ENCODE measurements at regions of chr5 and their contacts with region 1.

Region 1: DNA sequence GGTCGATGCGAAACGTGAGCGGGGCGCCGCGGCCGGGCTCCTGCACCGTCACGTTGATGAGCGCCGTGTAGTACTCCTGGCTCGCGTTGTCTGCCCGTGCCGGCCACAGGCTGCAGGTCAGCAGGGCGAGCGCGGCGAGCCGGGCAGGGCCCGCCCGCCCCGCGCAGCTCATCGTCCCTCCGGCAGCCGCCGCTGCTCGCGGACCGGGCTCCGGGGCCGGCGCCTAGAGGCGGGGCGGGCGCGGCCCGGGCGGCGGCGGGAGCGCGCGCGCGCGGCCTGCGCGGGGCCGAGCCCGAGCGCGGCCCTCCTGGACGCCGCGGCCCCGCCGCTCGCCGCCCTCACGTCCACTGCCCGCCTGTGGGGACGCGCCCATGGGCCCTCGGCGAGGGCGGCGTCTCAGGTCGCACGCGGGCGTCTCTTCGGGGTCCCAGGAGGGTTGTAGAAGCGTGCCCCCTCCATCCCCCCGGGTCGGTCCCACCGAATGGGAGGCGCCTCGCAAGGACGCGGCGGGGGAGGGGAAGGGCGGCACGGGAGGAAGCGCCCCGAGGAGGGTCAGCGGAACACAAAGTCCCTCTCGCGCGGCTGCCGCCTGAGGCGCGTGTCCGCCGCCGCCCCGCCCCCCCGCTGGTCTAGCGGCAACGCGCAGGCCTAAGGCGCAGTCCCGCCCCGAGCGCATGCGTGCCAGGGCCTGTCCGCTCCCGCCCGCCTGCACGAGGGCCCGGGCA is at the start of gene RNF130:
- DNase-seq: peak; percentile 73 to 97
- H3K4me3 ChIP-seq: peak within 1 kb of the TSS; percentile 78
- H3K27ac ChIP-seq: peak within 1 kb of the TSS; percentile 68
- H3K4me1 ChIP-seq: peaks cover 20% of the 10 kb centered on the region
- H3K27me3 ChIP-seq: no peaks in the 10 kb centered on the region
- CTCF ChIP-seq: no peak
- total RNA-seq, gene RNF130: 49.6 and 52.9 TPM in 2 replicates

Region 2: GRCh38 chr5:179550511-179551230 is 521.0 kb before region 1 on chr5 and contains the start of gene RUFY1:
- CTCF ChIA-PET with region 1: no interaction called
- POLR2A ChIA-PET with region 1: no interaction called
- intact Hi-C with region 1: loop called (anchors 5 kb)
- DNase-seq: peak; percentile 58 to 91
- H3K4me3 ChIP-seq: peak within 1 kb of the TSS; percentile 100
- H3K27ac ChIP-seq: peak within 1 kb of the TSS; percentile 75
- H3K4me1 ChIP-seq: peaks cover 33% of the 10 kb centered on the region
- H3K27me3 ChIP-seq: no peaks in the 10 kb centered on the region
- CTCF ChIP-seq: no peak
- total RNA-seq, gene RUFY1: 63.9 and 72.2 TPM in 2 replicates

Region 3: DNA sequence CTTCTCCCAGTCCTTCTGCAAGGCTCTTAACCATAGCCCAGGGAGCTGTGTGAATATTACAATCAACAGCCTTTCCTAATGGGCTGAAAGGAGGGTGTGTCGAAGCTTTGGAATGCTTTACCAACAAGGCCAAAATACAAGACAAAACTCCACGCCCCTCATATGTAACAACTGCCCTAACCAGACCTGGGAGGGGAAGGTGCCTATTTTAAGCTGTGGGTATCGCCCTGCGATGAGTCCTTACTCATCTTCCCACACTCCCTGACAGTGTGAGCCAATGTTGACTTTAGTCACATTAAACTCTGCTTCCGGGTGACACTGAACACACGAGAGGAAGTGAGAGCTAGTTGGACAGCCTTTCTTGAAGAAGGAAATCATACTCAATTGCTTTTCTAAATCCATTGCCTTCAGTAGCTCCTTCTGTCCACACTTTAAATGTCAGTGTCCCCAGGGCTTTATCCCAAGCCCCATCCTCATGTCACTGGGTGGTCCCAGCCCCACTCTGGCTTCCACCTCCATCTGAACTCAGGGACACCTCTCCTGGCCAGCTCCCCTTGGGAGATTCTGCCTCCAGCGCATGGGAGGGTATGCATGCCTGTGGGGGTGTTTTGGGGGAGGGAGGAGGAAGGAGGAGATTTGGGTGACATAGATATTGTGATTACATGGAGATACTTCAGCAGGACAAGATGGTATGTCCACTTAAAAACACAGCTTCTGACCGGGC is 157.5 kb before region 1 on chr5:
- CTCF ChIA-PET with region 1: no interaction called
- POLR2A ChIA-PET with region 1: no interaction called
- intact Hi-C with region 1: loop called (anchors 5 kb)
- DNase-seq: peak; percentile 78 to 98
- H3K4me3 ChIP-seq: peak overlapping the region; percentile 35; the same call in 1 of the 2 replicates
- H3K27ac ChIP-seq: peak overlapping the region; percentile 87
- H3K4me1 ChIP-seq: peaks cover 21% of the 10 kb centered on the region
- H3K27me3 ChIP-seq: no peaks in the 10 kb centered on the region
- CTCF ChIP-seq: no peak

Region 4: DNA sequence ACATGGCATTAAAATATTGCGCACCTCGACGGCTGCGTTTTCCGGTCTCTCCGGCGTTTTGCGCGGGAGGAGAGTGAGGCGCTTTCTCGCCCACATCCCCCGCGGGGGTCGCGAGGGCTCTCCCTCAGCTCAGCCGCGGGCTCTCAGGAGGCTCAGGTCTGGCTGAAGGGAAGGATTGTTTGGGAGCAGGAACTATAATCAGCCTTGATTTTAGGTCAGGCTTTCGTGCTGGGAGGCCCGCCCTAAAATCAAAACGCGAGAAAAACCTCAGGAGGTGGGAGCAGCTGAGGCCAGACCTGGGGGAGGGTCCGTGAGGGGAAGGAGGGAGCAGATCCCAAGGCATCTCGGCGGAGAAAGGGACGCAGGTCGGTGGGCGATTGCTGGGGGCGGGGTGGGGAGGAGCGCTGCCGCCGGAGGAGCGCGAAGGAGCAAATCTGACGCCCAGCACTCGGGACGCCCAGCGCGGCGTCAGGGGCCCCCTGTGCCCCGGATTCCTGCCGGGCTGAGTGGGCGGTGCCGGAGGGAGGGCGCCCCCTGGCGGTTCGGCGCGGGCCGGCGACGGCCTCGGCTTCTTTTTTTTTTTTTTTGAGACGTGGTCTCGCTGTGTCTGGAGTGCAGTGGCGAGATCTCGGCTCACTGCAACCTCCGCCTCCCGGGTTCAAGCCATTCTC is 18.5 kb after region 1 on chr5:
- CTCF ChIA-PET with region 1: interaction called, 22 read pairs
- POLR2A ChIA-PET with region 1: no interaction called
- intact Hi-C with region 1: no loop called
- DNase-seq: peak in 1 of 2 experiments; percentile 84
- H3K4me3 ChIP-seq: peak overlapping the region; percentile 41; the same call in 1 of the 2 replicates
- H3K27ac ChIP-seq: no peak overlapping the region
- H3K4me1 ChIP-seq: peaks cover 8% of the 10 kb centered on the region
- H3K27me3 ChIP-seq: no peaks in the 10 kb centered on the region
- CTCF ChIP-seq: peak; percentile 82

Measured in PC-9 (cell line).